ENCODE measurements at regions of chrX and their contacts with region 1.

Region 1: DNA sequence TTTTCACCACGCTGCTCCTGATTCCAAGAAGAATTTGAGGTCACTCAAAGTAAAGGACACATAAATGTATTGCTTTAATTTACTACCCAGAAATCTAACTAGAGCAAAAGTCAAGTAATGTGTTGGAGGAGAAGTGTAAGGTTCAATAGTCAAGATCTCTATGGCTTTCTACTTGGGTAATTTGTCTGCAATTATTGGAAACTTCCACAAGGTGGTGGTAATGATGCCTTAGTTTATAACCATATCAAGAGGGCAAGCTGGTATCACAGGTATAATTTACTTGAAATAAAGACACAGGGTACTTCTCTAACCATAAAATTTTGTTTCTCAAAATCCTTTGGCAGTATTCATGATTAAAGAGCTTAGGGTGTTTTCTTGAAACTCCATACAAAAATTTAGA is 10.2 kb upstream of the GRIA3 start:
- DNase-seq: peak; percentile 51
- ATAC-seq: peak; percentile 31; the same call in 1 of the 2 replicates
- H3K4me3 ChIP-seq: no peak overlapping the region
- H3K27ac ChIP-seq: no peak overlapping the region
- H3K4me1 ChIP-seq: peaks cover 8% of the 10 kb centered on the region
- H3K27me3 ChIP-seq: no peaks in the 10 kb centered on the region
- CTCF ChIP-seq: peak; percentile 54

Region 2: DNA sequence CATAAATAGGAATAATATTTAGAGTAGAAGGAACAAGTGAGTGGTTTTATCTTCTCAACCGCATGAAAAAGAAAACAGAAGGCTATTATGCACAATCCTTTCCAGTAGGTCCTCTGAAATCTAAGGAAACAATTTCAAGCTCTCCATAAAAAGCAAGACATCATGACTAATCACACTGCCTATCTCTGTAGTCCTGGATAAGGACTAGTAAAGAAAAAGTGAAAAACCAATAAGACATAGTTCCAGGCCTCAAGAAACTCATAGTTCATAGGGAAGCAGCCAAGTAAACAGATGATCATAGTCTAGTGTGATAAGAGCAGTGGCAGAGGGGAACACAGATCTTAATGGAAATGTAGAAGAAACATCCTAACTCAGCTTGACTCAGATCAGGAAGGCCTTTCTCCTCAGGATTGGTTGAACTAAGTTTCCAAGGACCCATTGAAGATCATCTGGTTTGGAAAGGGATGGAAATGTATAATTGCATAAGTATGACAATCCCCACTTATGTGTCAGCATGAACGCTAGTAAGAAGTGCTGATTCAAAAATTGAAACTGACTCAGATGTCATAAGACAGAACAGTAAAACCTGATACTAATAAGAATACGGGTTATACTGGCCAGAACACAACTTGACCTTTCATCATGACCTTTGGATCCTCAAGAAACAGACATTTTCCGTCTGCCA is 165.5 kb after region 1 on chrX:
- CTCF ChIA-PET with region 1: interaction called, 5 read pairs
- POLR2A ChIA-PET with region 1: no interaction called
- intact Hi-C with region 1: loop called (anchors 10 kb)
- DNase-seq: peak; percentile 39
- ATAC-seq: peak; percentile 39
- H3K4me3 ChIP-seq: no peak overlapping the region
- H3K27ac ChIP-seq: 0 out of 2 replicates have a peak overlapping the region, but pooled peaks have one; percentile 19
- H3K4me1 ChIP-seq: peaks cover 7% of the 10 kb centered on the region; the same call in 1 of the 2 replicates
- H3K27me3 ChIP-seq: no peaks in the 10 kb centered on the region
- CTCF ChIP-seq: no peak

Region 3: GRCh38 chrX:123590842-123591491 is 417.1 kb after region 1 on chrX:
- CTCF ChIA-PET with region 1: no interaction called
- POLR2A ChIA-PET with region 1: no interaction called
- intact Hi-C with region 1: loop called (anchors 10 kb)
- DNase-seq: peak; percentile 45
- ATAC-seq: peak; percentile 67
- H3K4me3 ChIP-seq: peak overlapping the region; percentile 18; the same call in 1 of the 2 replicates
- H3K27ac ChIP-seq: no peak overlapping the region
- H3K4me1 ChIP-seq: peaks cover 13% of the 10 kb centered on the region
- H3K27me3 ChIP-seq: no peaks in the 10 kb centered on the region
- CTCF ChIP-seq: no peak

Measured in PC-3 (cell line).